Spleen (tissue), 13 donors: ENCODE measurements at regions of chr16 and their contacts with region 1.

Region 1: DNA sequence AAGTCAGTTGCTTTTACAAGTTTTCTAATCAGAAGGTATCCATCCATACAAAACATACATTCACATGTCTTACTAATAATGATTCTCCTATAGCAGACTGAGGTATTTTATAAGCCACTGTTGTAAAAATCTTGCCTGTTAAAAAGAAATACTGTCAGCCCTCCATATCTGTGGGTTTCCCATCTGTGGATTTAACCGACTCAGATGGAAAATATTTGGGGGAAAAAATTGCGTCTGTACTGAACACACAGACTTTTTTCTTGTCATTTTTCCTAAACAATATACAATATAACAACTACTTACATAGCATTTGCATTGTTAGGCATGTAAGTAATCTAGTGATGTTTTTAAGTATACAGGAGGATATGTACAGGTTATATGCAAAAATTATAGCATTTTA is 90.4 kb downstream of the PARN start:
- DNase-seq: no peak
- H3K4me3 ChIP-seq: no peak overlapping the region
- H3K27ac ChIP-seq: no peak overlapping the region
- H3K4me1 ChIP-seq: no peaks in the 10 kb centered on the region
- H3K27me3 ChIP-seq: no peaks in the 10 kb centered on the region
- CTCF ChIP-seq: no peak
- POLR2A ChIP-seq: no peak

Region 2: DNA sequence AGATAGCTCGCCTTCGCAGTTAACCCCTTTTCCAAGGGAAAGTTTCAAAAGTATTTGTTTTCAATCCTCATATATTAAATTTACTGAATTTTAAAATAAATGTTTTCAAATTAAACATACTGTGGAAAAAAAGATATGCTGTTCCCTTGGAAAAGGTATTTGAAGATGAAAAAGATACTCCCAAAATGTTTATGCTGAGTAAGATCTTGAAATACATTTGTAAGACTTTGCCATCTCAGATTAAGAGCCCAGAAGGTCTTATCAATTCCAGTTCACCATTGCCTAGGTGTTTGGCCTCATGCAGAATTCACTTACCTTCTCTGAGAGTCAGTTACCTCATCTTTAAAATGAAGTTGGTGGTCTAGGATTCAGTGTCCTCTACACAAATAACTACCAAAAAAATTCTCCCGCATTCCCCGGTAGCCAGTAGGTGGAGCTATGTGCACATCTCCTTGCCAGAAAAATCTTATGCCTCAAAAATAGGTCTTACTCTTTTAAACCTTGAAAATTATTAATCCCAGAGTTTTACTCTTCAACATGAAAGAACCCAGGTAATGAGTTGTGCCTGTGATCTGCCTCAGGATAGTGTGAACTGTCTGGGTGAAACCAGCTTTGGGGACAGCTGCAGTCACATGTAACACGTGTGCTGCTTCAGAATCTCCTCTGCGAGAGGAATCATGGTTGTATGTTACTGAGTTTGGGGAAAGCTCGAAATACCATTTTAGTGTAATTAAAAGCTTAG is 290.2 kb before region 1 on chr16:
- intact Hi-C with region 1: loop called (anchors 5 kb)
- DNase-seq: no peak
- H3K4me3 ChIP-seq: no peak overlapping the region
- H3K27ac ChIP-seq: no peak overlapping the region
- H3K4me1 ChIP-seq: no peaks in the 10 kb centered on the region
- H3K27me3 ChIP-seq: no peaks in the 10 kb centered on the region
- CTCF ChIP-seq: peak in 10 of 11 experiments; percentile 29 to 77 (median 62)
- POLR2A ChIP-seq: no peak

Region 3: DNA sequence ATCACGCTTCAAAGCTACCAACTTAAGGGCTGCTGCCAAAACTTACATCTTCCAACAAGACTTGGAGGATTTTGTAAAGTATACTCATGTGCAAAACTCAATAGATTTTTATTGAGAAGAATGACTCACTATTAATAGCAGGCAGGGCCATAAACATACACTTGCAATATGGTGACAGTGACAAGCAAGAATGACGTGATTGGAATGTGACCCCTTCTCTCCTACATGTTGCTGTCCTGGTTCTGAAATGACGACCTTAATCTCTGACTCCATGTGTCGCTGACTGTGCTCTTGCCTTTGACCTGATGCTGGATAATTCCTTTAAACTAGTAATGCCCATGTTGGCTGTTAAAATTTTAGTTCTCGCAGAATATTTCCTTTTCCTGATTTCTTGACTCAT is 84.1 kb before region 1 on chr16:
- intact Hi-C with region 1: no loop called
- DNase-seq: no peak
- H3K4me3 ChIP-seq: no peak overlapping the region
- H3K27ac ChIP-seq: no peak overlapping the region
- H3K4me1 ChIP-seq: no peaks in the 10 kb centered on the region
- H3K27me3 ChIP-seq: no peaks in the 10 kb centered on the region
- CTCF ChIP-seq: no peak
- POLR2A ChIP-seq: no peak